ENCODE measurements at regions of chr17 and their contacts with region 1.

Region 1: DNA sequence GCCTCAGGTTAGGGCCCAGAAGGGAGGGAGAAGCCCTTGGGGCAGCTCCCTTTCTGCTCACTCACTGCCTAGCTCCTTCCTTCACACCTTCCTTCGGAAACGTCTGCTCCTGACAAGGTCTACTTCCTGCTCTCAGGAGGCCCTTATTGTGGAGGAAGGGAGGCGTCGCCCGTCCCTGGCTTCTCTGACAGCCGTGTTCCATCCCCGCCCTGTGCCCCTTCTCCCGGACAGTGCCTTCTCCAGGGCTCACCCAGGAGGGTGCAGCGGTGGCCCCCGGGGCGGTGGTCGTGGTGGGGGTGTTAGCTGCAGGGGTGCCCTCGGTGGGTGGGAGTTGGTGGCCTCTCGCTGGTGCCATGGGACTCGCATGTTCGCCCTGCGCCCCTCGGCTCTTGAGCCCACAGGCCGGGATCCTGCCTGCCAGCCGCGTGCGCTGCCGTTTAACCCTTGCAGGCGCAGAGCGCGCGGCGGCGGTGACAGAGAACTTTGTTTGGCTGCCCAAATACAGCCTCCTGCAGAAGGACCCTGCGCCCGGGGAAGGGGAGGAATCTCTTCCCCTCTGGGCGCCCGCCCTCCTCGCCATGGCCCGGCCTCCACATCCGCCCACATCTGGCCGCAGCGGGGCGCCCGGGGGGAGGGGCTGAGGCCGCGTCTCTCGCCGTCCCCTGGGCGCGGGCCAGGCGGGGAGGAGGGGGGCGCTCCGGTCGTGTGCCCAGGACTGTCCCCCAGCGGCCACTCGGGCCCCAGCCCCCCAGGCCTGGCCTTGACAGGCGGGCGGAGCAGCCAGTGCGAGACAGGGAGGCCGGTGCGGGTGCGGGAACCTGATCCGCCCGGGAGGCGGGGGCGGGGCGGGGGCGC is 231.9 kb downstream of the SEC14L1 start:
- DNase-seq: peak; percentile 90 to 95 (median 91)
- ATAC-seq: peak; percentile 28 to 75 (median 58)
- H3K4me3 ChIP-seq: peak overlapping the region; percentile 66 to 98 (median 88)
- H3K27ac ChIP-seq: peak overlapping the region; percentile 92 to 99 (median 95)
- H3K4me1 ChIP-seq: peaks cover 5 to 75% (median 70%) of the 10 kb centered on the region in 12 donors
- H3K27me3 ChIP-seq: no peaks in the 10 kb centered on the region
- CTCF ChIP-seq: peak in 1 of 12 donors; percentile 21
- POLR2A ChIP-seq: peak in 1 of 2 donors; percentile 12

Region 2: GRCh38 chr17:77331301-77331864 is 41.3 kb before region 1 on chr17:
- intact Hi-C with region 1: loop called in 6 of 10 experiments (anchors 2 to 5 kb)
- DNase-seq: peak; percentile 91 to 96 (median 92)
- ATAC-seq: peak; percentile 74 to 92 (median 88)
- H3K4me3 ChIP-seq: peak overlapping the region in 7 of 12 donors; percentile 21 to 45 (median 41)
- H3K27ac ChIP-seq: peak overlapping the region in 9 of 12 donors; percentile 2 to 85 (median 55)
- H3K4me1 ChIP-seq: peaks cover 0 to 31% (median 9%) of the 10 kb centered on the region in 12 donors
- H3K27me3 ChIP-seq: no peaks in the 10 kb centered on the region
- CTCF ChIP-seq: peak; percentile 93 to 98 (median 94)
- POLR2A ChIP-seq: no peak

Region 3: DNA sequence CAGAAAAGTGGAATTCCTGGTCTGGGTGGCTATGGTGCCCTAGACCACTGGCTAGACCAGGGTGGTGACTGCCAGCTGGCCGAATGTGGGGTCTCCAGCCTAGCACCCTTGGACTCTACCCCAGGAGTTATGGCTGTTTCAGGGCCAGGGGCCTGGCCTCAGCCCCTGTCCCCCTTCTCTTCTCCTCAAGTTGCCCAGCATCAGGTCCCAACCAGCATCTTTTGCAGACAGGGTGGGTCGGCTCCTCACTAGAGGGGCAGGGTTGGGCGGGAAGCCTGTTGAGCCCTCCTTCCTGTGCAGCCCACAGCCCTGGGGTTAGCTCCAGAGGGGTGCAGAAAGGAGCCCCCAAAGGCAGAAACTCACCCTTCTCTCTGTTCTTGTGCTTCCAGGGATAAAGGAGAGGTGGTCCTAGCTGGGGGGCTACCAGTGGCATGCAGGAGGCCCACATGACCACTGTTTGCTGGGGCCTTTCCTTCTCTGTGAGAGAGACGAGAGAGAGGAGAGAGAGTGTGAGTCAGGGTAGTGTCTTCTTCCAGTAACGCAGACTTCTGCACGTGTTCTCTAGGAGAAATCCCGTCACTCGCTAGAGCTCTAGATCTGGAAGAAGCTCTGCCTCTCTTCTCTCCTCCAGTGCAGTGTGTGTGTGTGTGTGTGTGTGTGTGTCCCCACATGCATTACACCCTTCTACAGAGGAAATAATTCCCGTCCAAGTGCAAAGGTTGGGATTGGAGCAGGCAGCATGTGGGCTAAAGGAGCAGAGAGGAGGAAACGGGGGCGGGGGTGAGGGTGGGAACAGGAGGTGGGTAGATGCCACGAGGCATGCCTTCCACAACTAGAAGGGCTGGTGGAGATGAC is 22.5 kb before region 1 on chr17:
- intact Hi-C with region 1: loop called in 1 of 10 experiments (anchors 1 kb)
- DNase-seq: peak in 3 of 5 donors; percentile 30 to 55 (median 32)
- ATAC-seq: peak; percentile 3 to 29 (median 28)
- H3K4me3 ChIP-seq: no peak overlapping the region
- H3K27ac ChIP-seq: peak overlapping the region in 8 of 12 donors; percentile 33 to 86 (median 72)
- H3K4me1 ChIP-seq: peaks cover 6 to 56% (median 38%) of the 10 kb centered on the region in 12 donors
- H3K27me3 ChIP-seq: no peaks in the 10 kb centered on the region
- CTCF ChIP-seq: no peak
- POLR2A ChIP-seq: no peak

Region 4: GRCh38 chr17:77385750-77386501 is 13.3 kb after region 1 on chr17:
- intact Hi-C with region 1: loop called in 1 of 10 experiments (anchors 2 kb)
- DNase-seq: peak in 4 of 5 donors; percentile 55 to 85 (median 69)
- ATAC-seq: peak in 3 of 4 donors; percentile 17 to 49 (median 36)
- H3K4me3 ChIP-seq: no peak overlapping the region
- H3K27ac ChIP-seq: peak overlapping the region; percentile 37 to 96 (median 83)
- H3K4me1 ChIP-seq: peaks cover 52 to 98% (median 93%) of the 10 kb centered on the region in 12 donors
- H3K27me3 ChIP-seq: no peaks in the 10 kb centered on the region
- CTCF ChIP-seq: no peak
- POLR2A ChIP-seq: no peak

Region 5: GRCh38 chr17:77404812-77405581 is 32.3 kb after region 1 on chr17:
- intact Hi-C with region 1: loop called in 1 of 10 experiments (anchors 2 kb)
- DNase-seq: peak in 4 of 5 donors; percentile 72 to 81 (median 75)
- ATAC-seq: peak; percentile 4 to 71 (median 44)
- H3K4me3 ChIP-seq: peak overlapping the region in 5 of 12 donors; percentile 3 to 53 (median 28)
- H3K27ac ChIP-seq: peak overlapping the region; percentile 12 to 97 (median 64)
- H3K4me1 ChIP-seq: peaks cover 29 to 91% (median 64%) of the 10 kb centered on the region in 12 donors
- H3K27me3 ChIP-seq: no peaks in the 10 kb centered on the region
- CTCF ChIP-seq: no peak
- POLR2A ChIP-seq: no peak

Region 6: DNA sequence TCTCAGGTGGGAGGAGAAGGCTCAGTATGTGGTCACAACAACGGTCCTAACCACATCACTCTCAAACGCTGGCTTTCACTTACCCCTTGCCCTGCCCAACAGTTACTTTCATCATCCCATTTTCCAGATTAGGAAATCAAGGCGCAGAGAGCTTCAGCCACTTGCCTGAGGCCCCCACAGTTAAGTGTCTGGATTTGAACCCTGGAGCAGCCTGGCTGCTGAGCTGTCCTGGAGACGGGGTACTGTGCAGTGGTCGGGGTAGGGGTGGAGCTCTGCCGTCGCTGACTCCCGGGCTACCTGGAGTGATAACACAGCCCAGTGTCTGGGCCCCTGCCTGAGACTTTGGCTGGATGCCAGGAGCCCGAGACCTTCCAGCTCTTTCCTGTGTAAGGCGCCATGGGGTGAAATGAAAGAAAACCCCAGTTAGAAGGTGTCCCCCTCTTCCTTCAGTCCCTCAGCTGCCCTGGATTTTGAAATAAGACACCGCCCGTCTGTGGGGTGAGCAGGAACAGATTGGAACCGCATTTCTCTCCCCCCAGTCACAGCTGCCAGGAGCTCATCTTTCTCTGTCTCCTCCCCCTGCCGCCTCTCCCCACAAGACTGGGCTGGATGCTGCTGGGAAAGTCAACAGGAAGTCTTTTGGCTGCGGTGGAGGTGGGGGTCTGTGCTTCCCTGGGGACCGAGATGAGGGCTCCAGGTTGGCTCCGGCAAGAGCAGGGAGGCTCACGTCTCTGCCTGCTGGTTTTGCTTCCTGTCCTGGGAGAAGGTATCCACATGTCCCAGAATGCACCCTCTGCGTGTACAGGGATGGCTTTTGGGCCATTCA is 48.3 kb after region 1 on chr17:
- intact Hi-C with region 1: loop called in 7 of 10 experiments (anchors 5 to 10 kb)
- DNase-seq: peak in 4 of 5 donors; percentile 66 to 73 (median 69)
- ATAC-seq: no peak
- H3K4me3 ChIP-seq: no peak overlapping the region
- H3K27ac ChIP-seq: peak overlapping the region in 11 of 12 donors; percentile 35 to 97 (median 58)
- H3K4me1 ChIP-seq: peaks cover 38 to 78% (median 68%) of the 10 kb centered on the region in 12 donors
- H3K27me3 ChIP-seq: no peaks in the 10 kb centered on the region
- CTCF ChIP-seq: no peak
- POLR2A ChIP-seq: no peak

Region 7: DNA sequence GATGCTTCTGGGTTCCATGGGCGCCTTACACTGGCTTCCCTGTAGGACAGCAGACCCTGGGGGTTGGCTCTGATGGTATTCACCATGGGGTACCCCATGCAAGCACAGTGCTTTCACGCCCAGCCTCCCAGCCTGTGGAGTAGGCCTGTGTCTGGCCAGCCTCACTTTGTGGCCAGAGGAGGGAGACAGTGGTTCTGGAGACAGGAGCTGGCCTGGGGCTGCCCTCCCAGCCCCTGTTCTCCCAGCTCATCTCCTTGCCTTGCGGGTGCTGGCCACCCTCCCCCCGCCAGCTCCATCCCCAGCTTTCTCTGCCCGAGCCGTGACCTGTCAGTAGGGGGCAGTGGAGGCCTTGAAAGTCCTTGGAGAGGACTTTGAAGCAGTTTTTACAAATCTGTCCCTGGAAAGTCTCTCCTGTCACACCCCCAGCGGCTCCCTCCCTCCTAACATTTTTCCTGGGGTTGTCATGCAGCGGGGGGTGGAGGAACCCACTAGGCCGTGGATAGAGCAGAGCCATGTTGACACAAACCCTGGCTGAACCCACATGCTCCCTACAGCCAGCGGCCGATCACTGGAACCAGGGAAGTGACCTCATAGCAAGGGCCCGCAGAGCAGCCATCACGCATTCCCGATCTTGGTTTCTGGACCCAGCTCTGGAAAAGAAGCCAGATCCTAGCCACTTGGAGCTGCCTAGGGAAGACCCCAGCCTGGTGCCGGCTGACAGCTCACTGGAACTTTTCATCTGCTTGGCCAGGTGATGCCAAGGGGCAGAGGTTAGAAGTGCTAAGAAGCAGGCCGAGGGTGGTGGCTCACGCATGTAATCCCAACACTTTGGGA is 57.5 kb after region 1 on chr17:
- intact Hi-C with region 1: loop called in 6 of 10 experiments (anchors 5 to 10 kb)
- DNase-seq: peak; percentile 92 to 95 (median 94)
- ATAC-seq: peak; percentile 81 to 92 (median 84)
- H3K4me3 ChIP-seq: no peak overlapping the region
- H3K27ac ChIP-seq: peak overlapping the region; percentile 58 to 97 (median 76)
- H3K4me1 ChIP-seq: peaks cover 23 to 98% (median 86%) of the 10 kb centered on the region in 12 donors
- H3K27me3 ChIP-seq: no peaks in the 10 kb centered on the region
- CTCF ChIP-seq: peak; percentile 73 to 95 (median 86)
- POLR2A ChIP-seq: peak in 1 of 2 donors; percentile 14

Region 8: DNA sequence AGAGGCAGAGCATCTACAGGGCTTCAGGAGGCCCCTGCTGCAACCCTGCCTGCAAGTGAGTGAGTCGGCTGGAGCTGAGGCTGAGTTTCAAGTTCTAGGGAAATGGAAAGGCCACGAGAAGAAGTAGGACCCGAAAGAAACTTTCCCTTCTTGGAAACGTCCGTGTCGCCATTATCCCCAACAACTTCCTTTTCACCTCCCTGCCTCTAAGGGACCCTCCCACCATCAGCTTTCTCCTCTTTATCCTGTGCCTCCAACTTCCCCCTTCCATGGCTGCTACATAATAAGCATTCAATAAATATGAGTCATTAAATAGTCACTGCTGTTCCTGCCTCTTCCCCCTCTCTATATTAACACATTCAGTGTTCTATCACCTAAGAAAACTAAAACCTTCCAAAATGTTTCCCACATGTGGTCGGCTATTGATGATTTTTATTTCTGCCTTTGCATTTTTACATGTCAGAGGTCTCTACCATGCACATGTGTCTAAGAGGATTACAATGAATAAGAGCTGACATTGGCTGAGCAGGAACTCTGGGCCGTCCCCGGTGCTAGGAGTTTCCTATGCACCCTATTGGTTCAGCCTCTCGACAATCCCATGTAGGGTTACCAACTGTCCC is 470.0 kb after region 1 on chr17:
- intact Hi-C with region 1: no loop called
- DNase-seq: peak in 1 of 5 donors; percentile 7
- ATAC-seq: no peak
- H3K4me3 ChIP-seq: no peak overlapping the region
- H3K27ac ChIP-seq: peak overlapping the region in 10 of 12 donors; percentile 25 to 89 (median 60)
- H3K4me1 ChIP-seq: peaks cover 0 to 47% (median 36%) of the 10 kb centered on the region in 12 donors
- H3K27me3 ChIP-seq: no peaks in the 10 kb centered on the region
- CTCF ChIP-seq: no peak
- POLR2A ChIP-seq: no peak

Measured in heart left ventricle (tissue), 16 donors.